ENCODE measurements at regions of chr2 and their contacts with region 1.

Region 1: GRCh38 chr2:171568089-171568488 is 45.8 kb downstream of the CYBRD1 start:
- DNase-seq: no peak
- H3K4me3 ChIP-seq: no peak overlapping the region
- CTCF ChIP-seq: peak; percentile 6

Region 2: GRCh38 chr2:171347591-171348032 is 220.5 kb before region 1 on chr2:
- CTCF ChIA-PET with region 1: no interaction called
- POLR2A ChIA-PET with region 1: no interaction called
- DNase-seq: peak; percentile 84
- H3K4me3 ChIP-seq: no peak overlapping the region
- CTCF ChIP-seq: no peak

Region 3: GRCh38 chr2:171579481-171579880 is 11.4 kb after region 1 on chr2:
- CTCF ChIA-PET with region 1: interaction called, 16 read pairs
- POLR2A ChIA-PET with region 1: no interaction called
- DNase-seq: no peak
- H3K4me3 ChIP-seq: no peak overlapping the region
- CTCF ChIP-seq: no peak

Region 4: DNA sequence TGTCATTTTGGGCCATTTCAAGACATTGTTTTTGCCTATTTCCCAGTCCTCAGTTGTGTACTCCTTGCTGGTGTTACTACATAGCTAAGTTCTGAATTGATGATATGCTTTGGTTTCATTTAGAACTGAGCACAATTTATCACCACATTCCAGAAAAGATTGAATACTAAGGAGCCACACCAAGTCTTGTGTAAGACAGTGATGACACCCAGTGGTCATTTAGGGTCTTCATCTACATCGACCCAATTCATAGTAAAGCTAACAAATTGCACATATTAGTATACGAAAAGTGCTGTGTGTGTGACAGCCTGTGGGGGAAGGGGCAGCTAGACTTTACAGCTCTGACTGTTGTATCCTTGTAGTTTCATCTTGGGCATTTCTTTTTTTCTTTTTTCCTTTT is 545.5 kb after region 1 on chr2:
- CTCF ChIA-PET with region 1: interaction called, 42 read pairs
- POLR2A ChIA-PET with region 1: no interaction called
- DNase-seq: no peak
- H3K4me3 ChIP-seq: no peak overlapping the region
- CTCF ChIP-seq: peak; percentile 29